HCT116 (cell line): ENCODE measurements at regions of chr18 and their contacts with region 1.

Region 1: DNA sequence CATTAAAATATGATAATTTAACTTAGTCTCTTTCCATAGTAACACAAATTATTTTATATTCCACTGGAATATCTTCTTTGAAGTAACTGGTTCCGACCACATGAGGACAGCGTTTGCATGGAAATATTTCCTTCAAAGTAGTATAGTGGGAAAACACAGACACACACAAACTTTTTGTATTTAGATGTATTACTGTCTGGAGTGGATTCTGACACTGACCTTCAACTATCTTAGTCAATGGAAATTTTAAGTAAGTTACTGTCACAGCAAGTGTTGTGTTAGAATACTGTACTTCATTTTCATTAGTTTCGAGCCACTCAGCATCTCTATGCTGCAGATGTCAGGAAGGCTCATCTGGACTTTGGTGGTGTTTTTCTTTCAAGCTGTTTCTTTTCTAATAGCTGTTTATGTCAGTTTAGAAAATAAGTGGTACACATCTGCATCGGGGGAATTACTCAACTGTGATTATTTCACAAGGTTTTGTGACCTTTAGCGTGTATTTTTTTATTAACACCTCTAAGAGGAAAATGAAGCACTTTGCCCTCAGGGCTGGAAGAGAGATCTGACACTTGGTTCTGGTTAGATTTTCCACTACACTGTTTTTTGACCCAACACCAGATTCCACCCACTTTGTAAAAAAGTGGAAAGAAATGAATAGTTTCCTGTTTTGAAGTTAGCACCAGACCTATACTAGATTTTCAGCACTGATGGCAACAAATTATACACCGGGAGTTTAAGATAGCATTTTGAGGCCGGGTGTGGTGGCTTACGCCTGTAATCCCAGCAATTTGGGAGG is 18.9 kb upstream of the THOC1 start:
- DNase-seq: no peak
- ATAC-seq: peak; percentile 52
- H3K4me3 ChIP-seq: no peak overlapping the region
- H3K27ac ChIP-seq: no peak overlapping the region
- H3K4me1 ChIP-seq: no peaks in the 10 kb centered on the region
- H3K27me3 ChIP-seq: no peaks in the 10 kb centered on the region
- CTCF ChIP-seq: peak; percentile 39 to 71 (median 66); a peak in 5 of 6 replicates
- POLR2A ChIP-seq: no peak
- RAD21 ChIP-seq: peak; percentile 85

Region 2: DNA sequence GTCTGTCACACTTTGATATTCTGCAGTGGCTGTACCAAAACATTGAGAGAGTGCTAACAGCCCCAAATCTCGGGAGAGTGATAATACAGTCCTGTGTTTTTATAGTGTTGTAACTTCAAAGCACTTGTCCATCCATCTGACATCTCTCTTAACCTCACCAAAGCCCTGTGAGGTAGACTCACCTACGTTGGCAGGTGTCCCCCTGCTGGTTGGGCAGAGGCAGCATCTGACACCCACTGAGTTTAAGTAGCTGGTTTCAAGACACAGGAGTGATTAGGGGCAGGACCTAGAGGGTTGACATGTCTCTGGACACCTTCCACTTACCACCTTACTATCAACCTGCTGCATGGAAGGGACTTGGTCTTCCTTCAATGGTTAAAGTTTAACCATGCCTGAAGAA is 190.9 kb after region 1 on chr18:
- CTCF ChIA-PET with region 1: interaction called, 3 read pairs
- POLR2A ChIA-PET with region 1: no interaction called
- RAD21 ChIA-PET with region 1: no interaction called
- intact Hi-C with region 1: loop called (anchors 2 kb)
- DNase-seq: peak; percentile 37
- ATAC-seq: peak; percentile 93
- H3K4me3 ChIP-seq: no peak overlapping the region
- H3K27ac ChIP-seq: no peak overlapping the region
- H3K4me1 ChIP-seq: peaks cover 0 to 7% of the 10 kb centered on the region in 2 experiments; a peak in 1 of 4 replicates
- H3K27me3 ChIP-seq: no peaks in the 10 kb centered on the region
- CTCF ChIP-seq: peak; percentile 52 to 85 (median 78); a peak in 5 of 6 replicates
- POLR2A ChIP-seq: no peak
- RAD21 ChIP-seq: peak; percentile 80

Region 3: GRCh38 chr18:616380-616995 is 329.8 kb after region 1 on chr18:
- CTCF ChIA-PET with region 1: interaction called, 3 read pairs
- POLR2A ChIA-PET with region 1: no interaction called
- RAD21 ChIA-PET with region 1: interaction called in 1 of 2 experiments, 3 read pairs
- intact Hi-C with region 1: loop called (anchors 1 kb)
- DNase-seq: peak; percentile 35
- ATAC-seq: peak; percentile 78
- H3K4me3 ChIP-seq: no peak overlapping the region
- H3K27ac ChIP-seq: no peak overlapping the region
- H3K4me1 ChIP-seq: no peaks in the 10 kb centered on the region
- H3K27me3 ChIP-seq: no peaks in the 10 kb centered on the region
- CTCF ChIP-seq: peak; percentile 62 to 76 (median 69)
- POLR2A ChIP-seq: no peak
- RAD21 ChIP-seq: peak; percentile 85

Region 4: DNA sequence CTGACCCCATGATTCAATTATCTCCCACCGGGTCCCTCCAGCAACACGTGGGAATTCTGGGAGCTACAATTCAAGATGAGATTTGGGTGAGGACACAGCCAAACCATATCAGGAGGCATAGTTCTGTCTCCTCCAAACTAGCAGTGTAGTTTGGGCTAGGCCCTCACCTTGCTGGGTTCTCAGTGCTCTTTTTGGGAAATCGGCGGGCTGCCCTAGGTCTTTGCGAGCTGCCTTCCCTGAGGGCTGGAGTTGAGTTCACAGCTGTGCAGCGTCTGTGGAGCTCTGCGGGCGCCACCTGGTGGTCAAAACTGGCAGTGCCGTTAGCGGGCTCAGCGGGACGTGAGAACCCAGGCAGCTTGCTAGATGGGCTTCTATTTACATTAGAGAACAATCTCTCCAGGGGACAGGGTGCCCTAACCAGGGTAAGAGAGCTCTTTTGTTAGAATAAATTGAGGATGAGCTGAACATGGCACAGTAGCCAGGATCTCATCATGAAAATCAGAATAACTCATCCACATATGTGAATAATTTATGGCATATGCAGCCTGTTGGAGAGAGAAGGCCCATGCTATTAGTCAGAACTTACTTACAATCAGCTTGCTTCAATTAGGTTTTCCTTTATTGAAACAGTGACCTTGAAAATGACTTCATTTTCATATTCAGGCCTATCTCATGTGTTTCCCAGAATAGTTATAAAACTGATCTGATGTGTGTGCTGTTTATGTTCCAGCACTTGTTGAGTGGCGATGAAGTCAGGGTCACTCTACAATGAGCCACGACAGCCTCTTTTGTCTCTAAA is 552.7 kb after region 1 on chr18:
- CTCF ChIA-PET with region 1: no interaction called
- POLR2A ChIA-PET with region 1: no interaction called
- RAD21 ChIA-PET with region 1: no interaction called
- intact Hi-C with region 1: loop called (anchors 10 kb)
- DNase-seq: peak; percentile 68
- ATAC-seq: peak; percentile 98
- H3K4me3 ChIP-seq: no peak overlapping the region
- H3K27ac ChIP-seq: no peak overlapping the region
- H3K4me1 ChIP-seq: peaks cover 7 to 34% of the 10 kb centered on the region in 2 experiments
- H3K27me3 ChIP-seq: no peaks in the 10 kb centered on the region
- CTCF ChIP-seq: peak; percentile 78 to 96 (median 93); a peak in 5 of 6 replicates
- POLR2A ChIP-seq: no peak
- RAD21 ChIP-seq: peak; percentile 73